Heart left ventricle (tissue), 16 donors: ENCODE measurements at regions of chr11 and their contacts with region 1.

Region 1: GRCh38 chr11:27485930-27486773 is 13.6 kb upstream of the LGR4 start:
- DNase-seq: peak in 1 of 5 donors; percentile 24
- ATAC-seq: peak in 2 of 4 donors; percentile 40 to 50
- H3K4me3 ChIP-seq: no peak overlapping the region
- H3K27ac ChIP-seq: no peak overlapping the region
- H3K4me1 ChIP-seq: no peaks in the 10 kb centered on the region
- H3K27me3 ChIP-seq: no peaks in the 10 kb centered on the region
- CTCF ChIP-seq: peak; percentile 76 to 97 (median 90)
- POLR2A ChIP-seq: no peak

Region 2: GRCh38 chr11:26286472-26287066 is 1199.6 kb before region 1 on chr11:
- intact Hi-C with region 1: loop called in 2 of 10 experiments (anchors 10 kb)
- DNase-seq: no peak
- ATAC-seq: no peak
- H3K4me3 ChIP-seq: no peak overlapping the region
- H3K27ac ChIP-seq: no peak overlapping the region
- H3K4me1 ChIP-seq: no peaks in the 10 kb centered on the region
- H3K27me3 ChIP-seq: no peaks in the 10 kb centered on the region
- CTCF ChIP-seq: peak in 4 of 12 donors; percentile 17 to 39 (median 26)
- POLR2A ChIP-seq: no peak

Region 3: GRCh38 chr11:26297189-26297975 is 1188.8 kb before region 1 on chr11:
- intact Hi-C with region 1: loop called in 1 of 10 experiments (anchors 10 kb)
- DNase-seq: no peak
- ATAC-seq: peak in 2 of 4 donors; percentile 55
- H3K4me3 ChIP-seq: no peak overlapping the region
- H3K27ac ChIP-seq: no peak overlapping the region
- H3K4me1 ChIP-seq: no peaks in the 10 kb centered on the region
- H3K27me3 ChIP-seq: peaks cover 0 to 9% (median 0%) of the 10 kb centered on the region in 9 donors
- CTCF ChIP-seq: peak; percentile 38 to 68 (median 54)
- POLR2A ChIP-seq: no peak

Region 4: DNA sequence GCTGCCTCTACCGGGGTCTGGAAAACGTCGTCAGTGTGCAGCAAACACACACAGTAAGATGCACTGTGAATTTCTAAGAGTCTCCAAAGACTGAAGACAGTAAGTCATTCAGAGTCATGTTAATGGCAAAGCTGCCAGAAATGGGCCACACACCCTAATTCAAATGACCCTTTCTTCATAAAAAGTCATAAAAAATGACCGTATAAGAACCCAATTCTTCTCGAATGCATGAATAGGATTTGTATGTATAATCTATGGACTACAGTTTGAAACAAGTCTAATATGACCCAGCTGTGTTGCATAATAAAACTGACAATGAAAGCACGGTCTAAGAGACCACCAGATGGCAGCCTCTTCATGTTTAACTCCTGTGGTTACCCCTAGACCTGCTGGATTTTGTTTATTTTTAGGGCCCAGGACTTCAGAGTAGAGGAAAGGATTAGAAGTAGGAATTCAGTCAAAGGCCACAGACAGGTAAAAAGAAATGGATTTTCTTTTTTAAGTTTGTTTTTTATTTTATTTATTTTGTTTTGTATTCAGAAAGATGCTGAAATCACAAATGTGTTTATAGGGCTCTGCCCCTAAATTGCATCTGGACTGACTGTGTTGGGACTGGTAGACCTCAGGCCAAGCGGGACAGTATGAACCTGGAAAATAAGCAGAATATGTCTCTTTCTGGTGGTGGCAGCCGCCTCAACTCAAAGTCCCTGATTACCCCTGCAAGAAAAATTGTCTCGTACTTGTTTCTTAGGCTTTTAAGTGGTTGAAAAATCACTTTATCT is 732.2 kb before region 1 on chr11:
- intact Hi-C with region 1: loop called in 4 of 10 experiments (anchors 5 to 10 kb)
- DNase-seq: peak in 3 of 5 donors; percentile 10 to 45 (median 21)
- ATAC-seq: peak in 3 of 4 donors; percentile 66 to 84 (median 75)
- H3K4me3 ChIP-seq: no peak overlapping the region
- H3K27ac ChIP-seq: no peak overlapping the region
- H3K4me1 ChIP-seq: peaks cover 0 to 8% (median 0%) of the 10 kb centered on the region in 12 donors
- H3K27me3 ChIP-seq: no peaks in the 10 kb centered on the region
- CTCF ChIP-seq: peak; percentile 26 to 74 (median 60)
- POLR2A ChIP-seq: no peak

Region 5: GRCh38 chr11:27084518-27084917 is 401.6 kb before region 1 on chr11:
- intact Hi-C with region 1: no loop called
- DNase-seq: no peak
- ATAC-seq: no peak
- H3K4me3 ChIP-seq: no peak overlapping the region
- H3K27ac ChIP-seq: no peak overlapping the region
- H3K4me1 ChIP-seq: no peaks in the 10 kb centered on the region
- H3K27me3 ChIP-seq: no peaks in the 10 kb centered on the region
- CTCF ChIP-seq: no peak
- POLR2A ChIP-seq: no peak

Region 6: GRCh38 chr11:27183672-27184457 is 302.3 kb before region 1 on chr11:
- intact Hi-C with region 1: loop called (anchors 1 to 5 kb)
- DNase-seq: peak in 4 of 5 donors; percentile 37 to 44 (median 43)
- ATAC-seq: peak in 2 of 4 donors; percentile 33 to 59
- H3K4me3 ChIP-seq: no peak overlapping the region
- H3K27ac ChIP-seq: no peak overlapping the region
- H3K4me1 ChIP-seq: peaks cover 0 to 5% (median 0%) of the 10 kb centered on the region in 12 donors
- H3K27me3 ChIP-seq: peaks cover 0 to 5% (median 0%) of the 10 kb centered on the region in 9 donors
- CTCF ChIP-seq: peak; percentile 50 to 86 (median 76)
- POLR2A ChIP-seq: no peak

Region 7: DNA sequence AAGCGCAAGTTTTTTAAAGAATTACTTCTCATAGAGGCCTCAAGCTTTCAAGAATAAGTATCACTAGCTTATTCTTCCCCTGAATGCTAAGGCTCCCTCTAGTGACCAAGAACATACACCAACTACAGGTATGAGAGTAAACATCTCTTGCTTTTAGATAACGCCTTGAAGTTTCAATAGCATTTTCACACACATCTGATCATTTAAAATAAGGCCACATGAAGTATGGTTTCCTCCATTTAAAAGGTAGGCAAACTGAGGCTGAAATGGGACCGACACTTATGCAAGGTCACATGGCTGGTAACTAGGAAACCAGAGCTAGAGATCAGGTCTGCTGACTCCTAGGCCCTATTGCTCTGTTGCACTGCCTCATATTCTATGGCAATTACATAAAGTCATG is 189.7 kb before region 1 on chr11:
- intact Hi-C with region 1: loop called in 4 of 10 experiments (anchors 5 to 10 kb)
- DNase-seq: no peak
- ATAC-seq: peak in 2 of 4 donors; percentile 53 to 73
- H3K4me3 ChIP-seq: no peak overlapping the region
- H3K27ac ChIP-seq: peak overlapping the region in 5 of 12 donors; percentile 5 to 62 (median 29)
- H3K4me1 ChIP-seq: peaks cover 0 to 8% (median 0%) of the 10 kb centered on the region in 12 donors
- H3K27me3 ChIP-seq: no peaks in the 10 kb centered on the region
- CTCF ChIP-seq: peak; percentile 44 to 73 (median 60)
- POLR2A ChIP-seq: no peak

Region 8: DNA sequence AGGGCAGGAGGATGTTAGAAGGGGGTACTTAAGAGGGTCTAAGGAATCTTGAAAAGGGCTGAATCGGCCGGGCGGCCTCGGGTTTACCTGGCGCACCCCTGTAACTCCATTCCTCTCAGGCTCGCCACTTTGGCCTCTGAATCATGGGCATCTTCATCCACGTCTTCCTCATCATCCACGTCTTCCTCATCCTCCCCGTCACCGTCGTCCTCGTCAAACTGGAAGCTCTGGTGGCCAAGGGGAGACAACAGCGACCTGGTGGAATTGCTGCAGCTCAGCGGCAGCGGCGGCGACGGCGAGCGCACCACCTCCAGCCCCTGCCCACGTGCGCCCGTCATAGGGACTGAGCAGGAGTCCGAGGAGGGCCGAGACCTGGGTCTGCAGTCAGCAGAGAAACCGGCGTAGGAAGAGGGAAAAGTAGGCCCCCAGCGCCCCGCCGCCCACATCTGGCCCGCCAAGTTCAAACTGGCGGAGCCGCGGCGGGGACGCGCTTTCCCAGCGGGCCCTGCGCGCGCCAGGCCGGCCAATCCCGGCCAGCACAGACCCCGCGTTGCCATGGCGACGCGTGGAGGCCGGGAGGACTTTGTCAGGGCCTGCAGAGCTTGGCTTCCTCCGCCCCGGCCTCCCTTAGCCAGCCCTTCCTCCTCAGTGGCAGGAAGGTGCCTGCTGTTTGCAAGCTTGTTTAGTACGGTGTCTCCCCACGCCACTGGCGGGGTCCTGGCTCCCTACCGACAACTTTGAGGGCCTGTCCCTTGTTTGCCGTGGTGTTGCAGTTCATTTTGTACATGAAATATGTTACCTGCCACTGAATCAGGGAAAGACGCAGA is 123.2 kb before region 1 on chr11 and contains the start of gene CCDC34:
- intact Hi-C with region 1: loop called in 1 of 10 experiments (anchors 10 kb)
- DNase-seq: peak; percentile 90 to 96 (median 94)
- ATAC-seq: peak; percentile 99 to 100 (median 100)
- H3K4me3 ChIP-seq: peak within 1 kb of the TSS; percentile 37 to 89 (median 76)
- H3K27ac ChIP-seq: peak within 1 kb of the TSS in 8 of 12 donors; percentile 3 to 56 (median 40)
- H3K4me1 ChIP-seq: peaks cover 0 to 18% (median 10%) of the 10 kb centered on the region in 12 donors
- H3K27me3 ChIP-seq: no peaks in the 10 kb centered on the region
- CTCF ChIP-seq: no peak
- POLR2A ChIP-seq: no peak
- total RNA-seq, gene CCDC34: 1.1 to 8.3 (median 3.2) TPM

Region 9: GRCh38 chr11:27612932-27613880 is 127.1 kb after region 1 on chr11:
- intact Hi-C with region 1: no loop called
- DNase-seq: no peak
- ATAC-seq: no peak
- H3K4me3 ChIP-seq: no peak overlapping the region
- H3K27ac ChIP-seq: no peak overlapping the region
- H3K4me1 ChIP-seq: no peaks in the 10 kb centered on the region
- H3K27me3 ChIP-seq: no peaks in the 10 kb centered on the region
- CTCF ChIP-seq: no peak
- POLR2A ChIP-seq: no peak